HepG2 (cell line): ENCODE measurements at regions of chr12 and their contacts with region 1.

Region 1: GRCh38 chr12:67648521-67649260 is at the start of gene DYRK2:
- DNase-seq: peak; percentile 29
- ATAC-seq: peak; percentile 45
- H3K4me3 ChIP-seq: peak within 1 kb of the TSS; percentile 79 to 84 (median 84)
- H3K27ac ChIP-seq: peak within 1 kb of the TSS; percentile 80
- H3K4me1 ChIP-seq: peaks cover 27% of the 10 kb centered on the region
- H3K27me3 ChIP-seq: 0 out of 5 replicates have a peak, but pooled peaks cover 0 to 3% of the 10 kb centered on the region in 2 experiments
- CTCF ChIP-seq: peak; percentile 18; the same call in 1 of the 2 replicates
- EP300 ChIP-seq: no peak
- POLR2A ChIP-seq: peak; percentile 69 to 77
- RAD21 ChIP-seq: peak; percentile 51; the same call in 1 of the 2 replicates
- total RNA-seq, gene DYRK2: 10.1 and 11.5 TPM in 2 replicates

Region 2: GRCh38 chr12:67268896-67269631 is 379.6 kb before region 1 on chr12 and contains the start of gene CAND1:
- CTCF ChIA-PET with region 1: no interaction called
- POLR2A ChIA-PET with region 1: interaction called, 11 read pairs
- in situ Hi-C with region 1: no loop called
- intact Hi-C with region 1: no loop called
- DNase-seq: peak; percentile 98
- ATAC-seq: peak; percentile 83
- H3K4me3 ChIP-seq: peak within 1 kb of the TSS; percentile 89 to 96 (median 95)
- H3K27ac ChIP-seq: peak within 1 kb of the TSS; percentile 96
- H3K4me1 ChIP-seq: peaks cover 36% of the 10 kb centered on the region
- H3K27me3 ChIP-seq: no peaks in the 10 kb centered on the region; a peak in 2 of 5 replicates
- CTCF ChIP-seq: peak; percentile 31; the same call in 1 of the 2 replicates
- EP300 ChIP-seq: no peak
- POLR2A ChIP-seq: peak; percentile 88
- RAD21 ChIP-seq: no peak
- total RNA-seq, gene CAND1: 138 and 241 TPM in 2 replicates

Region 3: DNA sequence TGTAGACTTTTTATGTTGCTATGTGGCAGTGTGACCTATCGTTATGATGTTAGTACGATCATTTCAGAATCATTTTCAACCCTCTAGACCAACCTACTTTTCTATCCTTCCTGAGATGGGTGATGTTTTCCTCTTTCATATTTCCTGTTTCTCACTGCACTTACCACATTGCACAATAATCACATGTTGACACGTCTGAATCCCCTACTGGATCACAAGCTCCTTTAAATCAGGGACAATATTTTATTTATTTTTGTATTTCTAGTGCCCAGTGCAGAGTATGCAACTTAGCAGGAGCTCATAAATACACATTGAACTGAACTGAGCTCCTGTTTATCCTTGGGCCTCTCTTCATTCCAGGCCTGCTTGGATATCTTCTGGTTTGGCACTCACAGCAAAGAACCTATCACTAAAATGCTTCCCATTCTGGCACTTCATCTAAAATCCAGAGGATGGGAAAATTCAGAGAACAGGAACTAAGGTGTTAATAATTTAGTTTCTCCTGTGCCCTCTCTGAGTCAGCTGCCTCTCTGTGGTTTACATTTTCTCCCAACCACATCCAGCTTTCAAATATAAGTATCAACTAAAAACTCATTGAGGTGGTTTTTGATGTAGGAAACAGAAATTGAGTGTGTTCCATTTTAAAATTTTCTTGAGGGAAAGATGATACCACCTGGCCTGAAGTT is 69.6 kb before region 1 on chr12:
- CTCF ChIA-PET with region 1: no interaction called
- POLR2A ChIA-PET with region 1: no interaction called
- in situ Hi-C with region 1: no loop called
- intact Hi-C with region 1: no loop called
- DNase-seq: no peak
- ATAC-seq: no peak
- H3K4me3 ChIP-seq: no peak overlapping the region
- H3K27ac ChIP-seq: no peak overlapping the region
- H3K4me1 ChIP-seq: no peaks in the 10 kb centered on the region
- H3K27me3 ChIP-seq: no peaks in the 10 kb centered on the region
- CTCF ChIP-seq: no peak
- EP300 ChIP-seq: no peak
- POLR2A ChIP-seq: no peak
- RAD21 ChIP-seq: no peak

Region 4: GRCh38 chr12:67710582-67710981 is 61.9 kb after region 1 on chr12:
- CTCF ChIA-PET with region 1: no interaction called
- POLR2A ChIA-PET with region 1: no interaction called
- in situ Hi-C with region 1: no loop called
- intact Hi-C with region 1: loop called (anchors 2 kb)
- DNase-seq: peak; percentile 67
- ATAC-seq: peak; percentile 99
- H3K4me3 ChIP-seq: no peak overlapping the region
- H3K27ac ChIP-seq: no peak overlapping the region
- H3K4me1 ChIP-seq: peaks cover 17% of the 10 kb centered on the region
- H3K27me3 ChIP-seq: no peaks in the 10 kb centered on the region
- CTCF ChIP-seq: no peak
- EP300 ChIP-seq: peak in 1 of 2 experiments; percentile 45; a peak in 1 of 4 replicates
- POLR2A ChIP-seq: no peak
- RAD21 ChIP-seq: no peak

Region 5: DNA sequence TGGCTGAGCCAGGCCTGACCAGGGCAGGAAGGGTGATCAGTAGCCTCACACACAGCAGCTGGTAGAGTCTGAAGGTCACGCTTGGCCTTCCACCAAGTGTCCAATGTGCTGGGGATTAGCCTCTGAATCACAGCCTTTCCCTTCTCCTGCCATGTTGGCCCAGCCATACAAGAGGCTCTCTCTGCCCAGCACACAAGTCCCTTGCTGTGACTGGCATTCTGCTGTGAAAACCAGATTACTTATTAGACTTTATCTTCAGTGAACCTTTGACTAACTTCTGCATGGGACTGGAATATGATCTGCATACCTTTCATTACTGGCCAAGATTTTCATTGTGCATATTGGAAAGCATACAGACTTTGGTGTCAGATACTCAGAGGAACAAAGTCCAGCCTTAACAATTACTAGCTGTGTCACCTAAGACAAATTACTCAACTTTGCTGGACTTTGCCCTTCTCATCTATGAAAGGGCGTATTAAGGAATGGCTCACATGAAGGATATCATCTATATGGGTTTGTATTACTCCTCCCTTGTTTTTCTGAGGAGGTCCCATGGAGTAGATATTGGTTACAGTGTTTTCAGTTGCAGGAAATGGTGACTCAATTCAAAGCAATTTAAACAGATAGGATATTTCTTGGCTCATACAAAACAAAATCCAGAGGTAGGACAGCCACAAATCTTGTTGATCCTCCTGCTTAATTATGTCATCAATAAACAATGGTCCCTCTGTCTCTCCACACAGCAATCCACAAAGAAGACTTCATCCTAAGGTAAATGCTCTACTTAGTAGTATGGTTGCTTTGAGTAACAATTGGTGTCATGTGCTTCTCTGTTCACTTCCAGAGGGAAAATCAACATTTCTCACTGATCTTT is 99.4 kb after region 1 on chr12:
- CTCF ChIA-PET with region 1: no interaction called
- POLR2A ChIA-PET with region 1: interaction called, 5 read pairs
- in situ Hi-C with region 1: no loop called
- intact Hi-C with region 1: loop called (anchors 1 kb)
- DNase-seq: peak; percentile 87
- ATAC-seq: peak; percentile 91
- H3K4me3 ChIP-seq: 0 out of 6 replicates have a peak overlapping the region, but pooled peaks of 1 of the 3 experiments have one; percentile 15
- H3K27ac ChIP-seq: peak overlapping the region; percentile 37
- H3K4me1 ChIP-seq: peaks cover 25% of the 10 kb centered on the region
- H3K27me3 ChIP-seq: no peaks in the 10 kb centered on the region
- CTCF ChIP-seq: no peak
- EP300 ChIP-seq: peak in 1 of 2 experiments; percentile 30; a peak in 1 of 4 replicates
- POLR2A ChIP-seq: no peak
- RAD21 ChIP-seq: no peak